Activated T-helper 1 cell treated with anti-CD3 and anti-CD28 coated beads, Interleukin-12 subunit alpha, Interleukin-12 subunit beta, Interleukin-2, Interleukin-4 antibody, amounts not matched to agents 30 ng/mL and 10 ng/mL and 1 ng/mL, durations not matched to agents 14 hours and 24 hours and 36 hours (primary cell): ENCODE measurements at regions of chr17 and their contacts with region 1.

Region 1: GRCh38 chr17:4709794-4710692 is at the start of gene ARRB2:
- DNase-seq: peak; percentile 99
- H3K4me3 Mint-ChIP-seq: peak within 1 kb of the TSS; percentile 98
- H3K27ac Mint-ChIP-seq: peak within 1 kb of the TSS; percentile 99
- H3K4me1 Mint-ChIP-seq: peaks cover 54% of the 10 kb centered on the region
- H3K27me3 Mint-ChIP-seq: no peaks in the 10 kb centered on the region
- total RNA-seq, gene ARRB2: 202 and 204 TPM in 2 replicates

Region 2: DNA sequence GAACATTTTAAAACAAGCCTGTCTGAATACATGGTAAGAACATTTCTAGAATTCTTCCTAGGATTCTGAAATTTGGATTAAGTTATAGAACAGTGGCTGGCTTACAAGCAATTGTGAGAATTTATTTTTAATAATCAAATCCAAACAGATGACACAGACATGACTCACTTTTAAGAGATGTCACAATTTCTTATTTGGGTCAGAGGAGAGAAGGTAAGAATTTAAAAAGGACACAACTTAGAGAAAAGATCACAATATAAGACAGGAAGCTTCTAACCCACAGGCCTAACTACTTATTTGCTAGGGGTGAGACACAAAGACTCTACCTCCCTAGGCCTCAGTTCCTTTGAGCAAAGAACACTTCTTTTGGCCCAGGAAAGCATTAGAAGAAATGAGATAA is 599.9 kb before region 1 on chr17:
- intact Hi-C with region 1: no loop called
- DNase-seq: no peak
- H3K4me3 Mint-ChIP-seq: no peak overlapping the region
- H3K27ac Mint-ChIP-seq: peak overlapping the region; percentile 14
- H3K4me1 Mint-ChIP-seq: peaks cover 30% of the 10 kb centered on the region
- H3K27me3 Mint-ChIP-seq: no peaks in the 10 kb centered on the region

Region 3: GRCh38 chr17:4733073-4733531 is 23.1 kb after region 1 on chr17:
- intact Hi-C with region 1: loop called (anchors 1 kb)
- DNase-seq: no peak
- H3K4me3 Mint-ChIP-seq: peak overlapping the region; percentile 38
- H3K27ac Mint-ChIP-seq: peak overlapping the region; percentile 65
- H3K4me1 Mint-ChIP-seq: peaks cover 57% of the 10 kb centered on the region
- H3K27me3 Mint-ChIP-seq: peaks cover 2% of the 10 kb centered on the region

Region 4: DNA sequence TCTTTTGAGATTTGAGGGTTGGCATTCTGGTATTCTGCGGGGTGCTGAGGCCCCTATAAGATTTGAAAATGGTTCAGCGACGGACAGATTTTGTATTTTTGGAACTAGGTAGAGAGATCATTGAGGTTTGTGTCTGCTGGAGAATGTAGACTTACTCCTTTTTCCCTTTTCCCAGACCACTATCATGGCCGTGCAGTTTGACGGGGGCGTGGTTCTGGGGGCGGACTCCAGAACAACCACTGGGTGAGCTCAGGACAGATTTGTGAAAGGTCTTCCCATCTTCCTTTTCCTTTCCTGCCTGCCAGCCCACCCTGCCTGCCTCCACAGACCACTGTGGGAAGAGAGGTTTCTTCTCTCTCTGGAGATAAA is 86.5 kb after region 1 on chr17:
- intact Hi-C with region 1: loop called (anchors 1 kb)
- DNase-seq: no peak
- H3K4me3 Mint-ChIP-seq: peak overlapping the region; percentile 100
- H3K27ac Mint-ChIP-seq: peak overlapping the region; percentile 99
- H3K4me1 Mint-ChIP-seq: peaks cover 7% of the 10 kb centered on the region
- H3K27me3 Mint-ChIP-seq: peaks cover 9% of the 10 kb centered on the region

Region 5: DNA sequence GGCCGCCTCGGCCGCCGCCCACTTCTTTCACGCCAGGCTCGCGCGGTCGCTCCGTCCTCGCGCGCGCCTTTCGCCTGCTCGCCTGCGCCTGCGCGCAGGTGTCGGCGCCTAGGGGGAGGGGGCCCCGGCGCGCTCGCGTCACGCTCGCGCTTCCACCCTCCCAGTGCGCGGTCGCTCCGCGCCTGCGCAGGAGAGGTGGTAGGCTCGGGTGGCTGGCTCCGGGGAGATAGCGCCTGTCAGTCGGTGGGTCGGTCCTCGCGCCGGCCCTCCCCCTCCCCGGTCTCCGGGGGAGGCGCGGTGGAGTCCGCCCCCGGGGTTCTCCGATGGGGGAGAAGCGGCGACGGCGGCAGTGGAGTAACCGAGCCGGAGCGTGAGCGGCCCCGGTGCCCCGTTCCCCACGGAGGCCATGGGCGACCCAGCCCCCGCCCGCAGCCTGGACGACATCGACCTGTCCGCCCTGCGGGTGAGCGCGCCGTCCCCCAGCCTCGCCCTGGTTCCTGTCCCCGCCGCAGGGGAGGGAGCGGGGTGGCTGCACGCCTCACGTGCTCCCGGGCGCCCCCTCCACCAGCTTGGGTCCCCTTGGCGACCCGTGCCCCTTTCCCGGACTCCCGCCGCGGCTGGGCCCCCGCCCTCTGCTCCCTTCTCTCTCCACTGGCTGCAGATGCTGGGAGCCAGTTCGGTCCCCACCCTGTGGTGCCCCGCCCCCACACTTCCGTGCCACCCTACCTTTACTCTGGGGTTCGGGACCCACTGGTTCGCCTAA is 123.3 kb after region 1 on chr17 and contains the start of gene MINK1:
- intact Hi-C with region 1: loop called (anchors 1 kb)
- DNase-seq: peak; percentile 90
- H3K4me3 Mint-ChIP-seq: peak within 1 kb of the TSS; percentile 93
- H3K27ac Mint-ChIP-seq: peak within 1 kb of the TSS; percentile 99
- H3K4me1 Mint-ChIP-seq: peaks cover 36% of the 10 kb centered on the region
- H3K27me3 Mint-ChIP-seq: no peaks in the 10 kb centered on the region
- total RNA-seq, gene MINK1: 66.5 and 67.5 TPM in 2 replicates

Region 6: DNA sequence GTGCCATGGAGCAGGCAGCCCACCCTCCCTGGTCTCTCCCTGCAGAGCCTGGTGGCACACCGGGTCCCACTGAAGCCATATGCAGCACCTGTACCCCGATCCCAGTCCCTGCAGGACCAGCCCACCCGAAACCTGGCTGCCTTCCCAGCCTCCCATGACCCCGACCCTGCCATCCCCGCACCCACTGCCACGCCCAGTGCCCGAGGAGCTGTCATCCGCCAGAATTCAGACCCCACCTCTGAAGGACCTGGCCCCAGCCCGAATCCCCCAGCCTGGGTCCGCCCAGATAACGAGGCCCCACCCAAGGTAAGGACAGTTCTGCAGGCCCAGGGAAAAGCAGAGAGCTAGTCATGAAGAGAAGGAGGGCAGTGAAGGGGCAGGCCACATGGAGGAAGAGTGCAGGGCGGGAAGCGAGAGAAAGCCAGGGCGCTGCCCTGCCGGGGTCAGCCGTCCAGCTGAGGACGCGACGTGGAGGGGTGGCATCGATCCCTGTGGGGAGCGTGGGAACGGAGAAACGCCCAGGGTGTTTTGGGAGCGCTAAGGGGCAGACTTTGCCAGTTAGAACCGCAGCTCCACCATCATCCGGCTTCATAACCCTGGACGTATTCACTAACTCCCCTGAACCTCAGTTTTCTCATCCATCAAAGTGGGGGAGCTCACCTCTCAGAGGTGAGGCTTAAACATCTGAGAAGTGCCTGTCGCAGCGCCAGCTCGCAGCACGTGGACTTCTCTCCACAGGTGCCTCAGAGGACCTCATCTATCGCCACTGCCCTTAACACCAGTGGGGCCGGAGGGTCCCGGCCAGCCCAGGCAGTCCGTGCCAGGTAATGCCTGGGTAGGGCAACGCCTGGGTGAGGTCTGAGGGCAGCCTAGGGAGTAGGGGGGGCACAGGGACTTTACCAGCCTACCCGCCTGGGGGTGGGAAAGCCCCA is 181.6 kb after region 1 on chr17:
- intact Hi-C with region 1: loop called (anchors 1 kb)
- DNase-seq: no peak
- H3K4me3 Mint-ChIP-seq: no peak overlapping the region
- H3K27ac Mint-ChIP-seq: no peak overlapping the region
- H3K4me1 Mint-ChIP-seq: peaks cover 5% of the 10 kb centered on the region
- H3K27me3 Mint-ChIP-seq: no peaks in the 10 kb centered on the region

Region 7: GRCh38 chr17:4948931-4949320 is 238.9 kb after region 1 on chr17:
- intact Hi-C with region 1: loop called (anchors 1 kb)
- DNase-seq: peak; percentile 77
- H3K4me3 Mint-ChIP-seq: peak overlapping the region; percentile 97
- H3K27ac Mint-ChIP-seq: peak overlapping the region; percentile 100
- H3K4me1 Mint-ChIP-seq: peaks cover 49% of the 10 kb centered on the region
- H3K27me3 Mint-ChIP-seq: peaks cover 2% of the 10 kb centered on the region